Prostate gland (tissue), 2 donors: ENCODE measurements at regions of chr15 and their contacts with region 1.

Region 1: DNA sequence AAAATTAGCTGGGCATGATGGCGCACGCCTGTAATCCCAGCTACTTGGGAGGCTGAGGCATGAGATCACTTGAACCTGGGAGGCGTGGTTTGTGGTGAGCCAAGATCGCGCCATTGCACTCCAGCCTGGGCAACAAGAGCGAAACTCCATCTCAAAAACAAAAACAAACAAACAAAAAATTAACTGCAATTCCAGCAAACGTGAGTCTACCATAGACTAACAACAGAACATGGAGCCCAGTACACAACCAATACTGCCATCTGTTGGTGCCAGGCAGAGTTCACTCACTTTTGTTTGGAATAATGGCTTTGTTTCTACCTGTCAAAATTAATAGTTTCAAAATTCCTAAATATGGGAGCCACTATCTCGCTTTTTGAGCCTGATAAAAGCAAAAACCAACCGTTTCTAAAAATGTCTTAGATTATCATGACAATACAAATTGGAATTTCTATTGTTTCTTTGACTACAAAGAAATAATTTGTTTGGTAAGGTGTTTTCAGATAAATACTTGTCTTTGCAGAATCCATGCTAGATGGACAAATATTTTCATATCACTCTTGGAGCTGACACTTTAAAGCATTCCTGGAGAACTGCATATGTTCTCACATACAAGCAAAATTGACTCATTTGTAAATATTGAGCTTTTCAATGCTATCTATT is 45.0 kb downstream of the GPR176 start:
- DNase-seq: no peak
- H3K4me3 ChIP-seq: no peak overlapping the region
- H3K27ac ChIP-seq: no peak overlapping the region
- H3K4me1 ChIP-seq: no peaks in the 10 kb centered on the region
- H3K27me3 ChIP-seq: no peaks in the 10 kb centered on the region
- CTCF ChIP-seq: peak in 3 of 4 experiments; percentile 38 to 53 (median 49)
- POLR2A ChIP-seq: no peak

Region 2: DNA sequence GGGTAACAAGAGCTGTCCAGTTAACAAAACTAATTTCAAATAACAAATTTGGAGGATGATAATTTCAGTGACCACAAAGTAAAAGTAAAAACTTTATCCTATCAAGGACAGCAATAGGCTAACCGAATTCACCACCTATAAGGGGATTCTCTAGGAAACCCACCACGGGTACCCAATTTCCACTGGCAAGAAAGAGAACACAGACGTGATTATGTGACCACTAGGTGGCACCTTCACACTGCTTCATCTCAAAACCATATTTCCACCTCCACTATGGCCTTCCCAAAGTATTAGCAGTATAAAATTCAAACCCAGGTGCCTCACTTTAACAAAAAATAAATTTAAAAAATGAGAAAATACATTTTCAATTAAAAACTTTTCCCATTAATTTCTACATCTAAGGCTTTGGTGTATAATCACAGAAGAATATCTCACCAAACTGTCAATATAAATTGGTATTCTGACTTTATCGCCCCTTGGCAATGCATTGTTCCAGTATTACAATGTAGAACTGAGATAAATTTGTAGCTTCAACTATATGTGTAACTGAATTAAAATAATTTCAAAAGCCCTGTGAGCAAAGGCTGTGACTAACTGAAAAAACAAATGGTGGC is 188.9 kb before region 1 on chr15:
- intact Hi-C with region 1: loop called (anchors 10 kb)
- DNase-seq: peak; percentile 28
- H3K4me3 ChIP-seq: no peak overlapping the region
- H3K27ac ChIP-seq: no peak overlapping the region
- H3K4me1 ChIP-seq: no peaks in the 10 kb centered on the region
- H3K27me3 ChIP-seq: no peaks in the 10 kb centered on the region
- CTCF ChIP-seq: peak; percentile 43 to 80 (median 77)
- POLR2A ChIP-seq: no peak

Region 3: GRCh38 chr15:39786447-39787056 is 88.5 kb before region 1 on chr15:
- intact Hi-C with region 1: loop called (anchors 1 kb)
- DNase-seq: no peak
- H3K4me3 ChIP-seq: no peak overlapping the region
- H3K27ac ChIP-seq: no peak overlapping the region
- H3K4me1 ChIP-seq: peaks cover 15% of the 10 kb centered on the region
- H3K27me3 ChIP-seq: no peaks in the 10 kb centered on the region
- CTCF ChIP-seq: peak; percentile 25 to 66 (median 60)
- POLR2A ChIP-seq: no peak

Region 4: DNA sequence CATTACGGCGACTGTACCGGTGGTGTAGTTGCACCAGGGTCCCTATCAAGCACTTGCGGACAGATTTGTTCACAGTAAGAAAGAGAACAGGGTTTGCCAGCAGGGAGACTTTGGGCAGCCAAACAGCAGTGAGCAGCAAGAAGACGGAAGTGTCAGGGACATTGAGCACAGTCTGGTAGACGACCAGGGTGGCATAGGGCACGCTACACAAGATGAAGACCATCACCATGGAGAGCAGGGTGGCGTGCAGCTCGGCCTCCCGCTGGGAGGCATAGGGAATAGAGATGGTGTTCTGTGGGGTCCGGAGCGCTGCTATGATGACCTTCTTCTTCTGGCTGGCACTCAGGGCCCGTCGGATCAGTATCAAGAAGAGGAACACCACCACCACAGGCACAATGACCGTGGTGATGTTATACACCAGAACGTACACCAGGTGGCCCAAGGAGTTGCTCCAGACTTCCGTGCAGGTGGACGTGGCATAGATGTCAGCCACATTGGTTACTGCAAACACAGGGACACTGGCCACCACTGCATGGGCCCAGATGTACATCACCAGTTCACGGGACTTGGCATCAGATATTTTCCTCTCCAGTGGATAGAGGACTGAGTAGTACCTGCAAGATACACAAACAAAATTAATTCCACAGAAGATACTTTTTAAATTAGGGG is 73.2 kb before region 1 on chr15:
- intact Hi-C with region 1: loop called (anchors 5 kb)
- DNase-seq: no peak
- H3K4me3 ChIP-seq: no peak overlapping the region
- H3K27ac ChIP-seq: no peak overlapping the region
- H3K4me1 ChIP-seq: no peaks in the 10 kb centered on the region
- H3K27me3 ChIP-seq: no peaks in the 10 kb centered on the region
- CTCF ChIP-seq: peak in 2 of 4 experiments; percentile 11 to 26
- POLR2A ChIP-seq: no peak